Activated CD4-positive, alpha-beta T cell treated with anti-CD3 and anti-CD28 coated beads for 36 hours (primary cell): ENCODE measurements at regions of chr7 and their contacts with region 1.

Region 1: DNA sequence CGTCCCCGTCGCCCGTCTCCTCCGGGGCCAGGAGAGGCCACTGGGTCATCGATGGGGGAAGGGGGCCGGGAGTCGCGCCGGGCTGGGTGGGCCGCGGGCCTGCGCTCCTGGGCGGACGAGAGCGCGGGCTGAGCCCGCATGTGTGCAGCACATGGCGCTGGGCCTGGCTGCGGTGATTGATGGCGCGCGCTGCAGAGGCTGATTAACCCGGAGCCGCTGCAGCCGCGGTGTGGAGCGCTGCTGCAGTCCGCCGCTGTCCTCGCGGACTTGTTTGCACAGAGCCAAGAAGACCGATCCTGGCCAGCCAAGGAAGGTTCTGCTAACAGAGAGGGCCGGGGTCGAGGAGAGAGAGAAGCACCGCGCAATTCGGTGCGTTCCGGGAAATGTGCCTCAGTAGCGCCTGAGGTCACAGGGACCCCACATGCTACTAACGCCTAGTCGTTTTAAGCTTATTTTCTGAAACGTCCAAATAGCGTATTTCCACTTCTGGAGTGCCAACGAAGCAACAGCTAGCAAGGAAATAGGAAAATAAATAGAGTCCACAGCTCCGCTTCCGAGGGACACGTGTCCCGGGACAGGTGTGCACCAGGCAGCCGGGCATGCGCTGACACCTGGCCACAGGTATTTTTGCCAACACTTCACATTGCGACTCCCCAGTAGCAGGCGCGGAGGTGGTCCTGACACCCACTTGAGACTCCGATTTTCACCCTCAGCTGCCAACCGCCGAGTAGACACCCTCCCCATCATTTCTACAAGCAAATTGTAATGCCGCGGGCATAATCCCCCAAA is 6.2 kb downstream of the MNX1 start:
- DNase-seq: peak; percentile 38
- ATAC-seq: no peak
- H3K4me3 Mint-ChIP-seq: no peak overlapping the region
- H3K27ac Mint-ChIP-seq: no peak overlapping the region
- H3K4me1 Mint-ChIP-seq: peaks cover 19% of the 10 kb centered on the region
- H3K27me3 Mint-ChIP-seq: peaks cover 67% of the 10 kb centered on the region

Region 2: GRCh38 chr7:155380221-155380861 is 1623.9 kb before region 1 on chr7:
- CTCF ChIA-PET with region 1: no interaction called
- POLR2A ChIA-PET with region 1: no interaction called
- intact Hi-C with region 1: loop called (anchors 5 kb)
- DNase-seq: peak; percentile 89
- ATAC-seq: peak; percentile 94
- H3K4me3 Mint-ChIP-seq: no peak overlapping the region
- H3K27ac Mint-ChIP-seq: no peak overlapping the region
- H3K4me1 Mint-ChIP-seq: peaks cover 23% of the 10 kb centered on the region
- H3K27me3 Mint-ChIP-seq: peaks cover 79% of the 10 kb centered on the region

Region 3: DNA sequence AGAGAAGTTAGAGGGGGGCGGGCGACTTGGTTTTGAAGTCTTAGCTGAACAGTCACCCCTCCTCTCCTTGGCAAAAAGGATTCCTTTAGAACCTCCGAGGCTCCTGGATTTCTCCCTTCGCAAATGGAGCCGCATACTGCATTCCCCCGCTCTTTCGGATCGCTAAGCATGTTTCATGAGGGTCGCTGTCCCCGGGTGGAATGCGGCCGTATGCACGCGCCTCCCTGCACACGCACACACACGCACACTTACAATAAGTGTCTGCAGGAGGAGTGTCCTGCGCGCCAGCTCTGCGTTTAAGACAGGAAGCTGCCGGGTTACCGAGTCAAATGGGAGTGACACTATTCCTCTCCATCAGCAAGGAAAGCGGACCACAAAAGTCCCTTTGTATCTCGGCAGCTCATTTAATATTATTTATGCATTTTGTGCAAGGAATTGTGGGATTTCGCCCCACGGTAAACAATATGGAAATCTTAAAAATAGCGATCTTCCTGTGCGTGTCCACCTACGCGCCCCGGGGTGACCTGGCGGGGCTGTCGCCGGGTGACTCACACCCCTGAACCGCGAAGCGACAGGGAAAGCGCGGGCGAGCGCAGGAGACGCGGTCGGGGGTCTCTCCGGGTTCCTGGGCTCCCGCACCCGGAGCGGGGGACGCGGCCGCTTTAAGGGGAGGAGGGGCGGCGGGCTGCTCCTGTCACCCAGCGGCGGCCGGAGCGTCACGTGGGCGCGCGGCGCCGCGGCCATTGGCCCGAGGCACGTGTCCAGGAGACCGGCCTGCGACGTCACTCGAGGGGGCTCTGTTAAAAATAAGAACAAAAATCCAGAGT is 1547.3 kb before region 1 on chr7:
- CTCF ChIA-PET with region 1: no interaction called
- POLR2A ChIA-PET with region 1: no interaction called
- intact Hi-C with region 1: loop called in 1 of 2 experiments (anchors 5 kb)
- DNase-seq: peak; percentile 69
- ATAC-seq: peak; percentile 33
- H3K4me3 Mint-ChIP-seq: peak overlapping the region; percentile 54
- H3K27ac Mint-ChIP-seq: no peak overlapping the region
- H3K4me1 Mint-ChIP-seq: peaks cover 18% of the 10 kb centered on the region
- H3K27me3 Mint-ChIP-seq: peaks cover 67% of the 10 kb centered on the region

Region 4: DNA sequence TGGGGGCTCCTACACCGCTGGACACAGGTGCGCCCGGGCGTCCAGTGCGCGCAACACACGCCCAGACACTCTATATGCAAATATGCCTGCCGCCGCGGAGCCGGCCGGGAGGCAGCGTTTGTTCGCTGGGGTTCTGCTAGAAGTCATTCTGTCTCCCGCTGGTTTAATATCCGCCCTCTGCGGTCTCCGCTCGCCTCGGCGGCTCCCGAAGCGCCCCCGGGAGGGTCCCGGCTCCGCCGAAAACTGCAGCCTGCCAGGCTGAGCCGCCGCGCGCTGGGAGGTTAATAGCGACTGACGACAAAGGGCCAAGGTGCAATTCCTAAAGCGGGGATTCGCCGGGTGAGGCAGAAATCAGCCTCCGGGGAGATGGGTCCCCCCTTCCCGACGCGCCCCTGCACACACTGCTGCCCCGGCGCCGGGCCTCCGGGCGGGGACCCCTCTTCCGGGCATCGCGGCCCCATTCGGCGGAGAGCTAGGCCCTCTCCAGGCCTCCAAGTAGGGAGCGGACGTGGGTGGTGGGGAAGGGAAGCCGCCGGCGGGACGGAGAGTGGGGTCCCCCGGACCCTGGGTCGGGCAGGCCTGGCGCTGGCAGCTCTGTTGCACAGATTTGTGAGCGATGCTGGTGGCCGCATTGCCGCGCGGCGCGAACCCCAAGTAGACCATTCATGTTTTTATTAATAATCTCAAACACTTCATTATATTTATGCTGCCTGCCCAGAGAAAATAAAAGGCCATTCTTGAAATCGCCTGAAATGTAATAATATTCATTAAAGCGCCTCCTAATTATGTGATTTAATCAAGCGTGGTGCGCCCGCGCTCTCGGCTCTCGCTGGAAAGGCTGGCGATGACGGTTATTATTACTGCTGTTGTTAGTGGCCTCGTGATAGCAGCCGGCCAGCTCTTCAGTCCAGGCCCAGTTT is 1537.2 kb before region 1 on chr7:
- CTCF ChIA-PET with region 1: no interaction called
- POLR2A ChIA-PET with region 1: no interaction called
- intact Hi-C with region 1: loop called in 1 of 2 experiments (anchors 5 kb)
- DNase-seq: peak; percentile 81
- ATAC-seq: peak; percentile 70
- H3K4me3 Mint-ChIP-seq: no peak overlapping the region
- H3K27ac Mint-ChIP-seq: no peak overlapping the region
- H3K4me1 Mint-ChIP-seq: peaks cover 11% of the 10 kb centered on the region
- H3K27me3 Mint-ChIP-seq: peaks cover 76% of the 10 kb centered on the region

Region 5: DNA sequence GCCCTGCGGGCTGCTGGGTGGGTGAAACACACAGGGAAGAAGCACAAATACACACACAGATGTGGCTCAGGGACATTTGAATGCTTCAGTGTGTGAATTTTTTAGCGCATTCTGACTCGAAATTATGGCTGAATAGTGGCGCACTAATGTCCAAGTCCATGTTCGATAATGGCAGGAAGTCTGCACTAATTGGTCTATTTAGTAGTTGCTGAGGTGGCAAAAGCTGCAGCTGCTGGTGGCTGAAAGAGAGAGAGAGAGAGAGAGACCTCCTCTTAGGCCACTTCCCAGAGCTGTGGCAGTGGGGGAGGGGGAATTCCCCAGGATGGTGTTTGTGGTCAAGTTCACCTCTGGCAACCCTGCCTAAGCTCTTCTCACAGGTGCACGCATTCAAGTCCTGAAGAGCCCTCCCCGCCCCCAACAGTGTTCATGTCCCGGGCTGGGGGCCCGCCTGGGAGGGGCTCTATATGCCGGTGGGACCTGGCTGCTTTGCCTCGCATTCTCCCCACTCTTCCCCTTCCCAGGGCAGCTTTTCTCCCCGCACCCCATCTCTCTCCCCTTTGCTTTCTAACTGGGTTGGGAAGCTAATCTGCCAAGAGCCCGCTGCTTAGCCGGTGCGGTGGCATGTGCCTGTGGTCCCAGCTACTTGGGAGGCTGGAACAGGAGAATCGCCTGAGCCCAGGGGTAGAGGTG is 12.3 kb after region 1 on chr7:
- CTCF ChIA-PET with region 1: interaction called, 5 read pairs
- POLR2A ChIA-PET with region 1: no interaction called
- intact Hi-C with region 1: loop called (anchors 1 to 2 kb)
- DNase-seq: peak; percentile 85
- ATAC-seq: peak; percentile 76
- H3K4me3 Mint-ChIP-seq: no peak overlapping the region
- H3K27ac Mint-ChIP-seq: no peak overlapping the region
- H3K4me1 Mint-ChIP-seq: peaks cover 25% of the 10 kb centered on the region
- H3K27me3 Mint-ChIP-seq: peaks cover 71% of the 10 kb centered on the region

Region 6: GRCh38 chr7:157690833-157691585 is 686.8 kb after region 1 on chr7:
- CTCF ChIA-PET with region 1: no interaction called
- POLR2A ChIA-PET with region 1: no interaction called
- intact Hi-C with region 1: loop called (anchors 5 to 10 kb)
- DNase-seq: no peak
- ATAC-seq: peak; percentile 47
- H3K4me3 Mint-ChIP-seq: peak overlapping the region; percentile 19
- H3K27ac Mint-ChIP-seq: no peak overlapping the region
- H3K4me1 Mint-ChIP-seq: peaks cover 18% of the 10 kb centered on the region
- H3K27me3 Mint-ChIP-seq: peaks cover 49% of the 10 kb centered on the region